ENCODE measurements at regions of chr10 and their contacts with region 1.

Region 1: GRCh38 chr10:27360581-27361172 is 120.1 kb upstream of the ACBD5 start:
- DNase-seq: peak; percentile 62
- ATAC-seq: peak; percentile 98
- H3K4me3 ChIP-seq: no peak overlapping the region
- H3K27ac ChIP-seq: no peak overlapping the region
- H3K4me1 ChIP-seq: 0 out of 2 replicates have a peak, but pooled peaks cover 5% of the 10 kb centered on the region
- H3K27me3 ChIP-seq: no peaks in the 10 kb centered on the region
- CTCF ChIP-seq: peak; percentile 90 to 98 (median 95); a peak in 5 of 6 replicates
- EP300 ChIP-seq: no peak
- POLR2A ChIP-seq: no peak
- RAD21 ChIP-seq: peak; percentile 100

Region 2: DNA sequence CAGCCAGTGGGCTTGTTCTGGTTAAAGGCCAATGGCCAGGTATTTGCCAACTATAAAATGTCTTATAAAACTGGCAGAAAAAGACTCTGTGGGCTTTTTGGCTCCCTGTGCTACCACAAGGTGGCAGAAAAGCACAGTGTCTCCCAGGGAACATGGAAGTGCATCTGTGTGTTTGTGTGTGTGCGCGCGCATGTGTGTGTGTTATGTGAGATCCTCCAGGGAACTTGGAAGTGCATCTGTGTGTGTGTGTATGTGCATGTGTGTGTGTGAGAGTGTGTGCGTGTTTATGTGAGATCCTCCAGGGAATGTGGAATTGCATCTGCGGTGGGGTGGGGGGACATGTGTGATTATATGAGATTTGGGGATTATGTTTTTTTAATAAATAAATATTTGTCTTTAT is 469.7 kb before region 1 on chr10:
- CTCF ChIA-PET with region 1: interaction called, 4 read pairs
- POLR2A ChIA-PET with region 1: interaction called, 3 read pairs
- RAD21 ChIA-PET with region 1: no interaction called
- SMC1A ChIA-PET with region 1: no interaction called
- in situ Hi-C with region 1: loop called (anchors 5 kb)
- intact Hi-C with region 1: no loop called
- DNase-seq: no peak
- ATAC-seq: peak; percentile 83
- H3K4me3 ChIP-seq: no peak overlapping the region
- H3K27ac ChIP-seq: no peak overlapping the region
- H3K4me1 ChIP-seq: no peaks in the 10 kb centered on the region
- H3K27me3 ChIP-seq: no peaks in the 10 kb centered on the region; a peak in 1 of 4 replicates
- CTCF ChIP-seq: peak; percentile 55 to 71 (median 68)
- EP300 ChIP-seq: no peak
- POLR2A ChIP-seq: no peak
- RAD21 ChIP-seq: peak; percentile 87

Region 3: GRCh38 chr10:27223964-27224363 is 136.7 kb before region 1 on chr10:
- CTCF ChIA-PET with region 1: interaction called, 82 read pairs
- POLR2A ChIA-PET with region 1: interaction called, 6 read pairs
- RAD21 ChIA-PET with region 1: interaction called, 14 read pairs
- SMC1A ChIA-PET with region 1: interaction called, 14 read pairs
- in situ Hi-C with region 1: loop called (anchors 5 kb)
- intact Hi-C with region 1: loop called (anchors 1 kb)
- DNase-seq: no peak
- ATAC-seq: peak; percentile 85
- H3K4me3 ChIP-seq: no peak overlapping the region
- H3K27ac ChIP-seq: no peak overlapping the region
- H3K4me1 ChIP-seq: no peaks in the 10 kb centered on the region
- H3K27me3 ChIP-seq: no peaks in the 10 kb centered on the region
- CTCF ChIP-seq: peak; percentile 40 to 64 (median 51)
- EP300 ChIP-seq: no peak
- POLR2A ChIP-seq: no peak
- RAD21 ChIP-seq: peak; percentile 51

Region 4: GRCh38 chr10:27252267-27253000 is 108.2 kb before region 1 on chr10:
- CTCF ChIA-PET with region 1: interaction called, 5 read pairs
- POLR2A ChIA-PET with region 1: no interaction called
- RAD21 ChIA-PET with region 1: no interaction called
- SMC1A ChIA-PET with region 1: interaction called, 4 read pairs
- in situ Hi-C with region 1: no loop called
- intact Hi-C with region 1: loop called (anchors 1 kb)
- DNase-seq: peak; percentile 27
- ATAC-seq: peak; percentile 100
- H3K4me3 ChIP-seq: peak overlapping the region; percentile 69
- H3K27ac ChIP-seq: peak overlapping the region; percentile 63
- H3K4me1 ChIP-seq: peaks cover 3% of the 10 kb centered on the region; the same call in 1 of the 2 replicates
- H3K27me3 ChIP-seq: no peaks in the 10 kb centered on the region
- CTCF ChIP-seq: peak; percentile 19 to 74 (median 46); a peak in 4 of 6 replicates
- EP300 ChIP-seq: no peak
- POLR2A ChIP-seq: peak; percentile 98
- RAD21 ChIP-seq: 0 out of 2 replicates have a peak, but pooled peaks have one; percentile 16

Region 5: DNA sequence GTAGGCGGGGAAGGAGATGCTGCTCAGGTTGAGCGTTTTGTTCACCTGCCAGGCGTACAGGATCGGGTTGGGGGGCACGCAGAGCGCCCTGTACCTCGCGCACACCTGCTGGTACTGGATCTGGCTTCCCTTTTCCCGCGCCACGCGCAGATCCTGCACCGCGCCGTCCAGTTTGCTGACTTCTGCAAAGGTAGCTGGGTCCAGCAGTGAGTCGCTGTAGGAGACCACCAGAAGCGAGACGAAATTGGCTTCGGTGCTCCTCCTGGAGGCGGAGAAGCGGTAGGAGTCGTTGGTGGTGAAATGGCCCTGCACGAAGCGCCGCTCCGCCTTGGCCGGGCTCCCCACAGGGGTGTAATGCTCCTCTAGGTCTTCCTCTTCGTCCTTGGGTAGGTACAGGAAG is 52.7 kb after region 1 on chr10:
- CTCF ChIA-PET with region 1: no interaction called
- POLR2A ChIA-PET with region 1: no interaction called
- RAD21 ChIA-PET with region 1: no interaction called
- SMC1A ChIA-PET with region 1: no interaction called
- in situ Hi-C with region 1: no loop called
- intact Hi-C with region 1: no loop called
- DNase-seq: no peak
- ATAC-seq: no peak
- H3K4me3 ChIP-seq: no peak overlapping the region
- H3K27ac ChIP-seq: no peak overlapping the region
- H3K4me1 ChIP-seq: no peaks in the 10 kb centered on the region
- H3K27me3 ChIP-seq: no peaks in the 10 kb centered on the region
- CTCF ChIP-seq: no peak
- EP300 ChIP-seq: no peak
- POLR2A ChIP-seq: no peak
- RAD21 ChIP-seq: no peak

Measured in GM12878 (cell line).